Posterior vena cava (tissue), 2 donors: ENCODE measurements at regions of chr19 and their contacts with region 1.

Region 1: GRCh38 chr19:9934132-9934950 is 2.0 kb downstream of the OLFM2 start:
- DNase-seq: peak; percentile 92

Region 2: GRCh38 chr19:10000171-10000826 is 66.0 kb after region 1 on chr19:
- intact Hi-C with region 1: loop called in 1 of 2 experiments (anchors 5 kb)
- DNase-seq: peak; percentile 89

Region 3: DNA sequence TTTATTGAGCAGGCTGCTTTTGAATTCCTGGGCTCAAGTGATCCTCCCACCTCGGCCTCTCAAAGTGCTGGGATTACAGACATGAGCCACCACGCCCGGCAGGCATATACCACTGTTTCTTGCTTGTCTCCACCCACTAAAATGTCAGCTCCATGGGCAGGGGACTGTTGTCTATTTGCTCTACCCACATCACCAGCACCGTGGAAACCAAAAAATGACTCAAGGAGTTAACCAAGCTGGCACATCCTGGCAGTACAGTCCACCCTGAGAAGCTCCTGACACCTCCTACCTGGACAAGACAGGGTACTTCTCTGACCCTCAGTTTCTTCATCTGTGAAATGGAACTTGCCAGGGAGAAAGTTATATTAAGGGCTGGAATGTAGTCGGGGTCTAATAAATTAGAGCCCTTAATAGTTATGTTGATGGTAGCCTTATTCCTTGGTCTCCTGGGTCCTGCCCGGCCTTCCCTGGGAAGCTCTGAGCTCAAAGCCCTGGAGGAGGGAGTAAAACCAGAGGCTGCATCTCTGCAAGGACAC is 92.9 kb after region 1 on chr19:
- intact Hi-C with region 1: loop called (anchors 2 to 5 kb)
- DNase-seq: no peak

Region 4: GRCh38 chr19:10033614-10034013 is 99.3 kb after region 1 on chr19:
- intact Hi-C with region 1: loop called (anchors 2 to 5 kb)
- DNase-seq: no peak

Region 5: GRCh38 chr19:10251792-10252694 is 317.7 kb after region 1 on chr19 and contains the start of gene MRPL4:
- intact Hi-C with region 1: loop called in 1 of 2 experiments (anchors 10 kb)
- DNase-seq: peak; percentile 98
- total RNA-seq, gene MRPL4: 26.2 to 28.2 TPM